ENCODE measurements at regions of chr9 and their contacts with region 1.

Region 1: DNA sequence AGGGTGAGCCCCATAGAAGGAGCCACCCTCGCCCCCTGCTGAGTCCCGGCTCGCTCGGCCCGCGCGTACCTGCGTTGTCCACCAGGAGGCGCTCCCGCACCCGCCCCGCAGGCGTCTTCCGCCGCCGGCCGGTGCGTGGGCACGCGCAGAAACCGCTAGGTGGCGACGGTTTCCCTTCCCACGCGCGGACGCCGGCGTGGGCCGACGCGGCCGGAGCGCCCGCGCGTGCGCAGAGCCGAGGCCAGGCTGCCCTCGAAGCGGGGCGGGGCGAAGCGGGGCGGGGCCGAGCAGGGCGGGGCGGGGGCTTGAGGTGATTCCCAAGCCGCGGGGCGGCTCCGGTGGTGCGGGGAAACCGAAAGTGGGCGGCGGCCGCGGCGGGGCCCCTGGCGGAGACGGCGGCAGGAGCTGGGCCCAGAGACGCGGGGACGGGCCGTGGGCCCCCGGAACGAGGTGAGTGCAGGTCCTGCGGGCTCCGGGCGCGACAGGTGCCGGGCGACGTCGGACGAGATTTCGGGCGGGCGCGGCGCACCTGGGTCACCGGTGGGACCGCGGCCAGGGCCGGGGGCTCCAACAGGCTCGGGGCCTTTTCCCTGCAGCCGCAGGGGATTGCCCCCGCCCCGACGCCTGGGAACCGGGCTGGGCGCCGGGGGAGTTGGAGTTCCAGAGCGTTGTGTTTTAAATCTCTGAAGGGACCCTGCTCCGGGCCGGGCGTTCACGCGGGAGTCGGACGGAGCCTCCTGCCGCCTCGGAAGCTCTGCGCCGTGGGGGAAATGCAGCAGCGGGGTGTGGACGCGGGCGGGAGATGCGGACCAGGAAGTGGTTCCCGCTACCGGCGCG is at the start of gene TDRD7:
- DNase-seq: peak; percentile 96
- ATAC-seq: peak; percentile 91
- H3K4me3 ChIP-seq: peak within 1 kb of the TSS; percentile 57 to 92 (median 85)
- H3K4me3 Mint-ChIP-seq: peak within 1 kb of the TSS; percentile 77
- H3K27ac ChIP-seq: peak within 1 kb of the TSS; percentile 61 to 79
- H3K27ac Mint-ChIP-seq: peak within 1 kb of the TSS; percentile 82
- H3K4me1 ChIP-seq: peaks cover 18% of the 10 kb centered on the region in 2 donors
- H3K4me1 Mint-ChIP-seq: peaks cover 34% of the 10 kb centered on the region
- H3K27me3 ChIP-seq: peaks cover 0 to 3% (median 0%) of the 10 kb centered on the region in 4 experiments
- H3K27me3 Mint-ChIP-seq: peaks cover 10% of the 10 kb centered on the region
- CTCF ChIP-seq: peak; percentile 100
- total RNA-seq, gene TDRD7: 19.7 and 20.6 TPM in 2 replicates

Region 2: GRCh38 chr9:96777426-96777864 is 634.6 kb before region 1 on chr9:
- CTCF ChIA-PET with region 1: no interaction called
- POLR2A ChIA-PET with region 1: no interaction called
- intact Hi-C with region 1: loop called (anchors 5 kb)
- DNase-seq: no peak
- ATAC-seq: no peak
- H3K4me3 ChIP-seq: peak overlapping the region; percentile 62 to 91 (median 80)
- H3K4me3 Mint-ChIP-seq: peak overlapping the region; percentile 97
- H3K27ac ChIP-seq: peak overlapping the region; percentile 57 to 90
- H3K27ac Mint-ChIP-seq: peak overlapping the region; percentile 95
- H3K4me1 ChIP-seq: peaks cover 7 to 14% of the 10 kb centered on the region in 2 donors
- H3K4me1 Mint-ChIP-seq: peaks cover 31% of the 10 kb centered on the region
- H3K27me3 ChIP-seq: no peaks in the 10 kb centered on the region
- H3K27me3 Mint-ChIP-seq: no peaks in the 10 kb centered on the region
- CTCF ChIP-seq: no peak

Region 3: DNA sequence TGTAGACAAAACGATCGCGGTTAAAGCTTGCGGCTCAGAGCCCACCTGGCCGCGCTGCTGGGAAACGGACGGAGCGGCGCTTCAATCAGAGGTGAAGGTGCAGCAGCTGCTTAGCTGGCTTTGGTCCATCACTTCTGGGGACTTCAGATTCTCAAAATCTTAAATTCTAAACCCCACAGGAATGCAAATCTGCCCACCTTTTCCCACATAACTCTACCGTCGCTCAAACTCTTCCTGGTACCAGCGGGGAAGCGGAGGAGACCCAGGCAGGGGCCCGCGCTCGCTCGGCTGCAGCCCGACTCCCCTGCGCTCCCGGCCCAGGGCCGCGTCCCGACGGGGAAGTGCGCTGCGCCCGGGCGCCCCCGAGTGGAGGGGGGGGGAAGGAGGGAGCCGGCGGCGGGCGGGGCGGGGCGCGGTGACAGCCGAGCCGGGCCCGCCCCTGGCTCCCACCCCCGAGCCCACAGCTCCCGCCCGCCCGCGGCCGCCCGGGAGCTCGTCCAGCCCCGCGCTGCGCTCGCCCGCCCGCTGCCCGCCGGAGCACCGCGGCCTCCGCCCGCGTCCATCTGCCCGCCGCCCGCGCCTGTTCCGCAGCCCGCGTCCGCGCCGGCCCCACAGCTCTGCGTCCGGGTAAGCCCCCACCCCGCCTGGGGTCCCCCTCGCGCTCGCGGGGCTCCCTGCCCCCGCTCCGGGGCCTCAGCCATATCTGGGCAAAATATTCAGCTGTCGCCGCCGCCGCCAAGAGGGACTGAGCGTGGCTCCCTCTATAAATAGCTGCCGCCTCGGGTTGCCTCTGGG is 89.4 kb after region 1 on chr9 and contains the start of gene TMOD1:
- CTCF ChIA-PET with region 1: interaction called, 3 read pairs
- POLR2A ChIA-PET with region 1: no interaction called
- intact Hi-C with region 1: loop called (anchors 2 kb)
- DNase-seq: peak; percentile 66
- ATAC-seq: peak; percentile 87
- H3K4me3 ChIP-seq: peak within 1 kb of the TSS in 3 of 5 experiments; percentile 45 to 60 (median 55)
- H3K4me3 Mint-ChIP-seq: peak within 1 kb of the TSS; percentile 89
- H3K27ac ChIP-seq: no peak within 1 kb of the TSS
- H3K27ac Mint-ChIP-seq: no peak within 1 kb of the TSS
- H3K4me1 ChIP-seq: peaks cover 16 to 20% of the 10 kb centered on the region in 2 donors
- H3K4me1 Mint-ChIP-seq: peaks cover 21% of the 10 kb centered on the region
- H3K27me3 ChIP-seq: peaks cover 0 to 48% (median 24%) of the 10 kb centered on the region in 4 experiments
- H3K27me3 Mint-ChIP-seq: peaks cover 37% of the 10 kb centered on the region
- CTCF ChIP-seq: no peak
- total RNA-seq, gene TMOD1: 1.9 and 2.5 TPM in 2 replicates

Region 4: DNA sequence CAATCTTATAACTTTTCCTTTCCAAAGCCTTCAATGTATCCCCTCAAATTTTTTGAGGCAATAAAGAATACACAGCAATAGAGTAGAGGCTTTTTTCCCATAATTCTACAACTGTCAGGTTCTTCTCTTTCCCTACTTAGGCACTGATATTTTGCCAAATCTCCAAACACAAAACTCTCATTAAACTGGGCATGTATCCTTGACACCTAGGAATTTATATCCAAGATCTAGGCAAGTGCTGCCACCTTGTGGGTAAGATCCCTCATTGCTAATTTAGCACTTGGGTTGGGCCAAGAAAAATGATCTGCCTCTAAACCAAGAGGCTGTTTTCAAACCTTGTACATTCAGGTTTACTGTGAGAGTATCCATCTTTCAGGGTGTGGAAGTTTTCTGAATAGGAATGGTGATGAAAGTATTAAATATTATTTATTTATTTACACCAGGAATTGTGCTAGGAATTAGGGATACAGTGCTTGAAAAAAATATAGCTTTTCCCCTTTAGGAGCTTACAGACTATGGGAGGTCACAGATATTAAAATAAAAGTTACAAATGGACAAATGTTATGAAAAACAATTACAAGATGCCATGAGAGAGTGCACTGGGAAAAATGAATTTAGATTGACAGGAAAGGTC is 203.5 kb after region 1 on chr9:
- CTCF ChIA-PET with region 1: interaction called, 15 read pairs
- POLR2A ChIA-PET with region 1: no interaction called
- intact Hi-C with region 1: loop called (anchors 1 kb)
- DNase-seq: peak; percentile 68
- ATAC-seq: peak; percentile 49
- H3K4me3 ChIP-seq: no peak overlapping the region
- H3K4me3 Mint-ChIP-seq: no peak overlapping the region
- H3K27ac ChIP-seq: no peak overlapping the region
- H3K27ac Mint-ChIP-seq: no peak overlapping the region
- H3K4me1 ChIP-seq: no peaks in the 10 kb centered on the region
- H3K4me1 Mint-ChIP-seq: peaks cover 8% of the 10 kb centered on the region
- H3K27me3 ChIP-seq: no peaks in the 10 kb centered on the region
- H3K27me3 Mint-ChIP-seq: no peaks in the 10 kb centered on the region
- CTCF ChIP-seq: peak; percentile 95

Region 5: GRCh38 chr9:97696803-97697601 is 285.0 kb after region 1 on chr9 and contains the start of gene XPA:
- CTCF ChIA-PET with region 1: no interaction called
- POLR2A ChIA-PET with region 1: no interaction called
- intact Hi-C with region 1: loop called (anchors 1 kb)
- DNase-seq: peak; percentile 97
- ATAC-seq: peak; percentile 92
- H3K4me3 ChIP-seq: peak within 1 kb of the TSS; percentile 67 to 84 (median 74)
- H3K4me3 Mint-ChIP-seq: peak within 1 kb of the TSS; percentile 91
- H3K27ac ChIP-seq: peak within 1 kb of the TSS; percentile 77 to 82
- H3K27ac Mint-ChIP-seq: peak within 1 kb of the TSS; percentile 94
- H3K4me1 ChIP-seq: peaks cover 30 to 40% of the 10 kb centered on the region in 2 donors
- H3K4me1 Mint-ChIP-seq: peaks cover 59% of the 10 kb centered on the region
- H3K27me3 ChIP-seq: no peaks in the 10 kb centered on the region
- H3K27me3 Mint-ChIP-seq: peaks cover 7% of the 10 kb centered on the region
- CTCF ChIP-seq: no peak
- total RNA-seq, gene XPA: 21.3 and 27.4 TPM in 2 replicates

Measured in B cell (primary cell).